GM12878 (cell line): ENCODE measurements at regions of chr20 and their contacts with region 1.

Region 1: GRCh38 chr20:667391-667964 is 8.1 kb downstream of the SCRT2 start:
- DNase-seq: no peak
- ATAC-seq: peak; percentile 88
- H3K4me3 ChIP-seq: no peak overlapping the region
- H3K27ac ChIP-seq: no peak overlapping the region
- H3K4me1 ChIP-seq: no peaks in the 10 kb centered on the region
- H3K27me3 ChIP-seq: peaks cover 3 to 6% of the 10 kb centered on the region in 2 experiments; a peak in 3 of 4 replicates
- CTCF ChIP-seq: peak; percentile 82 to 92 (median 88)
- EP300 ChIP-seq: no peak
- POLR2A ChIP-seq: no peak
- RAD21 ChIP-seq: peak; percentile 58

Region 2: GRCh38 chr20:561437-562231 is 105.8 kb before region 1 on chr20:
- CTCF ChIA-PET with region 1: interaction called, 27 read pairs
- POLR2A ChIA-PET with region 1: no interaction called
- RAD21 ChIA-PET with region 1: interaction called, 10 read pairs
- SMC1A ChIA-PET with region 1: interaction called, 20 read pairs
- in situ Hi-C with region 1: no loop called
- intact Hi-C with region 1: loop called (anchors 1 kb)
- DNase-seq: no peak
- ATAC-seq: peak; percentile 93
- H3K4me3 ChIP-seq: no peak overlapping the region
- H3K27ac ChIP-seq: no peak overlapping the region
- H3K4me1 ChIP-seq: no peaks in the 10 kb centered on the region
- H3K27me3 ChIP-seq: no peaks in the 10 kb centered on the region; a peak in 1 of 4 replicates
- CTCF ChIP-seq: peak; percentile 95 to 99 (median 99); a peak in 5 of 6 replicates
- EP300 ChIP-seq: no peak
- POLR2A ChIP-seq: no peak
- RAD21 ChIP-seq: peak; percentile 94

Region 3: DNA sequence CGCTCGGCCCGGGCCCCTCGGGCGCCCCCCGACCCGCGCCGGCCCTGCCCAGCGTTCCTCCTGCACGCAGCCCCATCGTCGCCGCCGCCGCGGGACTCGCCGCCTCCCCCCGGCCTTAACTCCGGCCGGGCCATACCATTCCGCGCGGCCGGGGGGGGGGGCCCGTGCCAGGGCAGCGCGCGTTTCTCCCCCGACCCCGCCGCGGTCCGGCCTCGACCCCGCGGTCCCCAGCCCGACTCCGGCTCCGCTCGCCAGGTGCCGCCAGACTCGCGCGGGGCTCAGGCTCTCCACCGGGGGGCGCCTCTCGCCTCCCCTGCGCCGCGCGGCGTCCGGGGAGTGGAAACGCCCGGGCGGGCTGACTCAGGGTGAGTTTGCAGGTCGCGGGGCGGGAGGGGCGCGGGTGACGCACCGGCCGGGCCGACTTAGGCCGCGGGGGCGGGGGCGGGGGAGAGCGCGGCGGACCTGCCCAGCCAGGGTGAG is 14.3 kb before region 1 on chr20 and contains the start of gene SRXN1:
- CTCF ChIA-PET with region 1: interaction called, 38 read pairs
- POLR2A ChIA-PET with region 1: no interaction called
- RAD21 ChIA-PET with region 1: interaction called, 6 read pairs
- SMC1A ChIA-PET with region 1: interaction called, 3 read pairs
- in situ Hi-C with region 1: no loop called
- intact Hi-C with region 1: no loop called
- DNase-seq: peak; percentile 30
- ATAC-seq: peak; percentile 95
- H3K4me3 ChIP-seq: peak within 1 kb of the TSS; percentile 83
- H3K27ac ChIP-seq: peak within 1 kb of the TSS; percentile 63
- H3K4me1 ChIP-seq: peaks cover 6% of the 10 kb centered on the region; the same call in 1 of the 2 replicates
- H3K27me3 ChIP-seq: no peaks in the 10 kb centered on the region
- CTCF ChIP-seq: peak; percentile 58 to 68 (median 60); a peak in 5 of 6 replicates
- EP300 ChIP-seq: no peak
- POLR2A ChIP-seq: peak; percentile 82
- RAD21 ChIP-seq: peak; percentile 38; the same call in 1 of the 2 replicates
- polyA plus RNA-seq, gene SRXN1: 4.1 to 7.5 TPM

Region 4: GRCh38 chr20:707442-708110 is 40.1 kb after region 1 on chr20:
- CTCF ChIA-PET with region 1: interaction called, 13 read pairs
- POLR2A ChIA-PET with region 1: no interaction called
- RAD21 ChIA-PET with region 1: no interaction called
- SMC1A ChIA-PET with region 1: no interaction called
- in situ Hi-C with region 1: no loop called
- intact Hi-C with region 1: no loop called
- DNase-seq: no peak
- ATAC-seq: no peak
- H3K4me3 ChIP-seq: no peak overlapping the region
- H3K27ac ChIP-seq: no peak overlapping the region
- H3K4me1 ChIP-seq: no peaks in the 10 kb centered on the region
- H3K27me3 ChIP-seq: no peaks in the 10 kb centered on the region; a peak in 1 of 4 replicates
- CTCF ChIP-seq: no peak
- EP300 ChIP-seq: no peak
- POLR2A ChIP-seq: no peak
- RAD21 ChIP-seq: no peak